H1 (cell line): ENCODE measurements at regions of chr2 and their contacts with region 1.

Region 1: DNA sequence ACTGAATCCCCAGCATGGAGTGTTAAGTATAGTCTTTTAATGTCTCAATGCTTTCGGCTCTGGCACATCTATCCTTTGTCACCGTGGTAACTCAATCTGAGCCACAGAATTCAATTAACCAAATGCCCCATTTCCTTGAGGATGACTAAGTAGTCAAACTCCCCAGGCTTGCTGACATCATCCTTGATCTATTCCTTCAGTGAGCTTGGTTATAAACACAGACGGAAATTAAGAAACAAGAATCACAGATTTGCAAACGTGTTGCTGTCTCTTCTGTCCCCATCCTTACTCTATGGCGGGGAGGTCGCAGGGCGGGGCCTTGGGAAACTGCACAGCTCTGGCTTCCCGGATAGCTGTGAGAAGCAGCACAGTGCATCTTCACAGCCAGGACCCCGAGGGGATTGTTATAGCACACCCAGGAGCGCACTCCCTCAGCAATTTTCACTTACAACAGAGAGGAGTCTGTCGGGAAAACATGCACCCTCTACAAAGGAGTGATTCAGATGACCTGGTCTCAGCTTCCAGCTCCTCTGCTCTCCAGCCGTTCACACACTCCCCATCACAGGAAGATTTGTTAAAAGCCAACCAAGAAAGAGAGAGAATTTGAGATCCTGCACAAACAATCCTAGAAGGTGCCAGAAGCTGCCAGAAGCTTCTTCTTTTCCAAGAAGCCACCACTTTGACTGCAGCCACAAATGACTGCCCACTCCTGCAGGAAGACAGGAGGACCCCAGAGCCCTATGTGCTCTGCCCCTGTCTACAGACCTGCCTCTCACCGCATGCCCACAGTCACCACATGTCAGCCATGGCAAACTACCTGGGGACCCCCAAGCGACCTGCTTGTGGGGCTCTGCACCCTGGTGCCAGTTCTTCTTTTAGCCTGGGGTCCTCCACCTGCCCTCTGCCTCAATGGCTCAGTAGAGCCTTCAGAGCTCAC is 44.9 kb upstream of the YWHAQ start:
- DNase-seq: peak in 1 of 2 experiments; percentile 50
- H3K4me3 ChIP-seq: no peak overlapping the region
- H3K27ac ChIP-seq: 0 out of 2 replicates have a peak overlapping the region, but pooled peaks have one; percentile 21
- H3K4me1 ChIP-seq: peaks cover 2 to 9% (median 7%) of the 10 kb centered on the region in 4 experiments
- H3K27me3 ChIP-seq: no peaks in the 10 kb centered on the region
- CTCF ChIP-seq: no peak
- EP300 ChIP-seq: no peak
- POLR2A ChIP-seq: no peak
- RAD21 ChIP-seq: no peak

Region 2: GRCh38 chr2:9646196-9647030 is 29.3 kb before region 1 on chr2:
- CTCF ChIA-PET with region 1: no interaction called
- POLR2A ChIA-PET with region 1: no interaction called
- DNase-seq: no peak
- H3K4me3 ChIP-seq: no peak overlapping the region
- H3K27ac ChIP-seq: no peak overlapping the region
- H3K4me1 ChIP-seq: peaks cover 2 to 10% (median 3%) of the 10 kb centered on the region in 4 experiments
- H3K27me3 ChIP-seq: no peaks in the 10 kb centered on the region
- CTCF ChIP-seq: no peak
- EP300 ChIP-seq: no peak
- POLR2A ChIP-seq: no peak
- RAD21 ChIP-seq: no peak

Region 3: GRCh38 chr2:9708683-9709538 is 33.2 kb after region 1 on chr2:
- CTCF ChIA-PET with region 1: interaction called, 11 read pairs
- POLR2A ChIA-PET with region 1: no interaction called
- DNase-seq: no peak
- H3K4me3 ChIP-seq: no peak overlapping the region
- H3K27ac ChIP-seq: no peak overlapping the region
- H3K4me1 ChIP-seq: no peaks in the 10 kb centered on the region
- H3K27me3 ChIP-seq: no peaks in the 10 kb centered on the region
- CTCF ChIP-seq: no peak
- EP300 ChIP-seq: no peak
- POLR2A ChIP-seq: no peak
- RAD21 ChIP-seq: no peak